ENCODE measurements at regions of chr16 and their contacts with region 1.

Region 1: GRCh38 chr16:29995911-29996772 is at the start of gene INO80E:
- DNase-seq: peak; percentile 94 to 99 (median 98)
- ATAC-seq: peak; percentile 99
- H3K4me3 ChIP-seq: peak within 1 kb of the TSS; percentile 100
- H3K4me3 Mint-ChIP-seq: peak within 1 kb of the TSS; percentile 86 to 99 (median 98)
- H3K27ac ChIP-seq: peak within 1 kb of the TSS; percentile 99
- H3K27ac Mint-ChIP-seq: peak within 1 kb of the TSS; percentile 93 to 99 (median 97)
- H3K4me1 ChIP-seq: peaks cover 16 to 18% of the 10 kb centered on the region in 2 donors
- H3K4me1 Mint-ChIP-seq: peaks cover 24 to 53% (median 38%) of the 10 kb centered on the region in 7 donors
- H3K27me3 ChIP-seq: no peaks in the 10 kb centered on the region
- H3K27me3 Mint-ChIP-seq: no peaks in the 10 kb centered on the region
- total RNA-seq, gene INO80E: 71.7 to 141 (median 95.8) TPM

Region 2: GRCh38 chr16:28863929-28864793 is 1132.0 kb before region 1 on chr16:
- CTCF ChIA-PET with region 1: no interaction called
- POLR2A ChIA-PET with region 1: no interaction called
- intact Hi-C with region 1: loop called in 1 of 2 experiments (anchors 10 kb)
- DNase-seq: peak in 4 of 9 donors; percentile 24 to 43 (median 30)
- ATAC-seq: no peak
- H3K4me3 ChIP-seq: peak overlapping the region; percentile 96
- H3K4me3 Mint-ChIP-seq: peak overlapping the region; percentile 97 to 100 (median 99)
- H3K27ac ChIP-seq: peak overlapping the region; percentile 85
- H3K27ac Mint-ChIP-seq: peak overlapping the region; percentile 95 to 99 (median 97)
- H3K4me1 ChIP-seq: peaks cover 7 to 11% of the 10 kb centered on the region in 2 donors
- H3K4me1 Mint-ChIP-seq: peaks cover 15 to 42% (median 29%) of the 10 kb centered on the region in 7 donors
- H3K27me3 ChIP-seq: no peaks in the 10 kb centered on the region
- H3K27me3 Mint-ChIP-seq: no peaks in the 10 kb centered on the region

Region 3: GRCh38 chr16:29825145-29826044 is 170.7 kb before region 1 on chr16:
- CTCF ChIA-PET with region 1: no interaction called
- POLR2A ChIA-PET with region 1: interaction called, 13 read pairs
- intact Hi-C with region 1: no loop called
- DNase-seq: peak in 6 of 9 donors; percentile 36 to 52 (median 43)
- ATAC-seq: no peak
- H3K4me3 ChIP-seq: peak overlapping the region; percentile 44
- H3K4me3 Mint-ChIP-seq: peak overlapping the region; percentile 70 to 95 (median 86)
- H3K27ac ChIP-seq: peak overlapping the region; percentile 72
- H3K27ac Mint-ChIP-seq: peak overlapping the region; percentile 56 to 99 (median 96)
- H3K4me1 ChIP-seq: peaks cover 61 to 81% of the 10 kb centered on the region in 2 donors
- H3K4me1 Mint-ChIP-seq: peaks cover 39 to 97% (median 57%) of the 10 kb centered on the region in 7 donors
- H3K27me3 ChIP-seq: no peaks in the 10 kb centered on the region
- H3K27me3 Mint-ChIP-seq: no peaks in the 10 kb centered on the region

Region 4: GRCh38 chr16:29900102-29900887 is 95.8 kb before region 1 on chr16 and contains the start of gene ASPHD1:
- CTCF ChIA-PET with region 1: no interaction called
- POLR2A ChIA-PET with region 1: no interaction called
- intact Hi-C with region 1: loop called in 1 of 2 experiments (anchors 1 kb)
- DNase-seq: peak; percentile 68 to 91 (median 79)
- ATAC-seq: peak; percentile 93
- H3K4me3 ChIP-seq: peak within 1 kb of the TSS; percentile 53
- H3K4me3 Mint-ChIP-seq: peak within 1 kb of the TSS; percentile 53 to 86 (median 72)
- H3K27ac ChIP-seq: no peak within 1 kb of the TSS
- H3K27ac Mint-ChIP-seq: no peak within 1 kb of the TSS
- H3K4me1 ChIP-seq: peaks cover 5% of the 10 kb centered on the region in 2 donors
- H3K4me1 Mint-ChIP-seq: peaks cover 4 to 19% (median 11%) of the 10 kb centered on the region in 7 donors
- H3K27me3 ChIP-seq: peaks cover 5 to 13% of the 10 kb centered on the region in 2 donors
- H3K27me3 Mint-ChIP-seq: peaks cover 16 to 35% (median 26%) of the 10 kb centered on the region in 5 donors
- total RNA-seq, gene ASPHD1: 0.27 TPM in 1 of 5 experiments, not detected in the others

Region 5: GRCh38 chr16:29961479-29962343 is 34.4 kb before region 1 on chr16 and contains the start of gene TMEM219:
- CTCF ChIA-PET with region 1: no interaction called
- POLR2A ChIA-PET with region 1: interaction called, 26 read pairs
- intact Hi-C with region 1: loop called (anchors 1 to 5 kb)
- DNase-seq: peak; percentile 90 to 99 (median 96)
- ATAC-seq: peak; percentile 94
- H3K4me3 ChIP-seq: peak within 1 kb of the TSS; percentile 91
- H3K4me3 Mint-ChIP-seq: peak within 1 kb of the TSS; percentile 88 to 94 (median 92)
- H3K27ac ChIP-seq: peak within 1 kb of the TSS; percentile 85
- H3K27ac Mint-ChIP-seq: peak within 1 kb of the TSS; percentile 88 to 97 (median 95)
- H3K4me1 ChIP-seq: peaks cover 10 to 17% of the 10 kb centered on the region in 2 donors
- H3K4me1 Mint-ChIP-seq: peaks cover 8 to 31% (median 23%) of the 10 kb centered on the region in 7 donors
- H3K27me3 ChIP-seq: no peaks in the 10 kb centered on the region
- H3K27me3 Mint-ChIP-seq: no peaks in the 10 kb centered on the region
- total RNA-seq, gene TMEM219: 64.3 to 89.7 (median 74.0) TPM

Region 6: DNA sequence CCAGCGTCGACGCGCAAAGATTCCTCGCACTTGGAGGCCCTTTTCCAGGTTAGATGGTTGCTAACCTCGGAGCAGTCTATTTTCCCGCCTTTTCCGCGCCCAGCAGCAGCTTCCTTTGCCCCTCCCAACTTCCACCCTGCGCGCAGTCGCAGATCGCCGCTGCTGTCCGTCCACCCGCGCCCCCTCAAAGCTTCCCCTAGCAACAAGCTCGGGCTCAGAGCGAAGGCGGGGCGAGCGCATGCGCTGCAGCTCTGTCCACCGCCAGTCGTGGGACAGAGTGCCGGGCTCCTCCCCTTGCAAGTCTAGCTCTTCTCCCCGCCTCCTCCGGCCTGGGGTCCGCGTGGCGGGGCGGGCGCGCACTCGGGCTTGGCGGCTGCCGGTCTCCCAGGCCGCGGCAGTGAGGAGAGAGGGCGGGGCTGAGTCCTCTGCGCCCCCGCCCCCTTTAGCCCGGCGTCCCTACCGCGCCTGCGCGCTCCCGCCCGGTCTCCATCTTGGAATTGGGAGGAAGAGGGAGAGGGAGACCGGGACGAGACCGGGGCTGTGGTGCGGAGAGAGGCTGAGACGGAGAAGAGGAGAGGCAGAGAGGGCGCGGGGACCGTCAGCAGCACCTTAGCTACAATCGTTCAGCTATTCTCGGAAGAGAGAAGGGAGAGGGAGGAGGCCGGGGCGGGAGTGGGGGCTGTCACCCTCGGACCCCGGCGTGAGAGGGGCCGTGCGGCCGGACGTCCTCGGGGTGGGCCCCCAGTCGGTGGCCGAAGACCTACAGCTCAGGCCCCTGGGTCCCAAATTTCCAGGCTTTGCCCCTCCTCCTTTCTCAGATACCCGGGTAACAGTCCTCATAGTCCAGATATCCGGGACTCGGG is 22.5 kb before region 1 on chr16 and contains the start of gene TAOK2:
- CTCF ChIA-PET with region 1: interaction called, 4 read pairs
- POLR2A ChIA-PET with region 1: interaction called, 26 read pairs
- intact Hi-C with region 1: loop called (anchors 1 kb)
- DNase-seq: peak; percentile 83 to 98 (median 89)
- ATAC-seq: peak; percentile 97
- H3K4me3 ChIP-seq: peak within 1 kb of the TSS; percentile 98
- H3K4me3 Mint-ChIP-seq: peak within 1 kb of the TSS; percentile 80 to 97 (median 94)
- H3K27ac ChIP-seq: peak within 1 kb of the TSS; percentile 78
- H3K27ac Mint-ChIP-seq: peak within 1 kb of the TSS; percentile 77 to 93 (median 91)
- H3K4me1 ChIP-seq: peaks cover 20 to 23% of the 10 kb centered on the region in 2 donors
- H3K4me1 Mint-ChIP-seq: peaks cover 23 to 39% (median 37%) of the 10 kb centered on the region in 7 donors
- H3K27me3 ChIP-seq: no peaks in the 10 kb centered on the region
- H3K27me3 Mint-ChIP-seq: no peaks in the 10 kb centered on the region
- total RNA-seq, gene TAOK2: 19.4 to 48.5 (median 42.9) TPM

Measured in naive thymus-derived CD4-positive, alpha-beta T cell (primary cell).